ENCODE measurements at regions of chr16 and their contacts with region 1.

Region 1: DNA sequence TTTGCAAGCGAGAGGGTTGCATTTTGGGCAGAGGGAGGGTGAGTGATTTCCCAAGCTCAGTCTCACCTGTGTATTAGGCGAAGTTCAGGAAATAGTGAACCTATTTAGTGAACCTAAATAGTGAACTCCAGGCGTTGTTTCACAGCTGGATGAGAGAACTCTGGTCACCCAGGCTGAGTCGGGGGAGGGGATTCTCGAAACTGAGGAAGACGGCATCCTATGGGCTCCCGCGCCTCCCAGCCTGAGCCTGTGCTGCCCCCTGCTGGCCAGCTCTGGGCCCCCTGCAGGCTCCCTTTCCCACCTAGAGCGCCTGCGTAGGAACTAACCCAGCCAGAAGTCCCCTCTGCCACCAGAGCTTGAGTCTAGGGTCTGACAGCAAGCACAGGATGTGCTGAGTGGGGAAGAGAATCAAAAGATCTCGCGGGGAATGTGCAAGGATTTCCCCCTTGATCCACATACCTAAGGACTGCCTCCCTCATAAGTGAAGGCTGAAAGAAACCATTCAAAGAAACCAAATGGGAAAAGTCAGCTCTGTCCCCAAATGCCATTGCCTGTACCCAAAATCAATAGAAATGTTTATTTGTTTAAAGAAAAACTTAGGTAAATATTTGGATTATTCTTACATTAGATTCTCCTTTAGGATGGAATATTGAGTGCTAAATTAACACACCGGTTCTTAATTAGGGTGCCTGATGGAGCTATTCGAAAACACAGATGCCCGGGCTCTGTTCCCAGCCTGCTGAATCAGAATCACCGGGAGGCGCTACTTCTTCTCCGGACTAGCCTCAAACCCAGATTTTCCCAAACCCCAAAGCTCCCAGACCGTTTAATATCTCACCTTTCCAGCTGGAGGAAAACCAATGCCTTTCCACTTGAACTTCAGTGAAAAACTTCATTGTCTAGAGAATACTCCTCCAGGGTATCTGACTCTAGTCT is 14.8 kb upstream of the MARVELD3 start:
- DNase-seq: peak; percentile 88
- ATAC-seq: peak; percentile 91
- H3K4me3 ChIP-seq: peak overlapping the region in 2 of 5 experiments; percentile 11 to 15
- H3K4me3 Mint-ChIP-seq: peak overlapping the region; percentile 70
- H3K27ac ChIP-seq: no peak overlapping the region
- H3K27ac Mint-ChIP-seq: no peak overlapping the region
- H3K4me1 ChIP-seq: peaks cover 3 to 13% of the 10 kb centered on the region in 2 donors
- H3K4me1 Mint-ChIP-seq: peaks cover 21% of the 10 kb centered on the region
- H3K27me3 ChIP-seq: peaks cover 0 to 2% (median 0%) of the 10 kb centered on the region in 4 experiments
- H3K27me3 Mint-ChIP-seq: no peaks in the 10 kb centered on the region
- CTCF ChIP-seq: peak; percentile 99

Region 2: GRCh38 chr16:69865701-69866100 is 1745.5 kb before region 1 on chr16:
- CTCF ChIA-PET with region 1: no interaction called
- POLR2A ChIA-PET with region 1: no interaction called
- intact Hi-C with region 1: no loop called
- DNase-seq: no peak
- ATAC-seq: no peak
- H3K4me3 ChIP-seq: no peak overlapping the region
- H3K4me3 Mint-ChIP-seq: no peak overlapping the region
- H3K27ac ChIP-seq: no peak overlapping the region
- H3K27ac Mint-ChIP-seq: no peak overlapping the region
- H3K4me1 ChIP-seq: no peaks in the 10 kb centered on the region
- H3K4me1 Mint-ChIP-seq: no peaks in the 10 kb centered on the region
- H3K27me3 ChIP-seq: no peaks in the 10 kb centered on the region
- H3K27me3 Mint-ChIP-seq: no peaks in the 10 kb centered on the region
- CTCF ChIP-seq: no peak

Region 3: DNA sequence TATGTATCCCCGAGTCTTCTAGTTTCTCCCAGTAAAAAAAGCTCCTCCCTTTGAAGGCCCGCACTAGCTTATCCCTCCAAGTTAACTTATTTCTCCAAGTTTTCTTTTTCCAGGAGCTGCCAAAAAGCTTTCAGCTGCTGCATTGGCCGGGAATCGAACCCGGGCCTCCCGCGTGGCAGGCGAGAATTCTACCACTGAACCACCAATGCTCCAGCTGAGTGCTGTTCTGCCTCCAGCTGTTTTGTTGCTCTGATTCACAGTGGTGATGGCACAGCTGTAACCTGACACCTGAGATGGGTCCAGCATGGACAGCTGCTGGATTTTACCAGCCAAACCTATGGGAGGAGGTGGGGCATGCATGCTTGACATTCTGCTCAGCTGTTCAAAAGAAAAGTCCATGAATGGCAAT is 832.3 kb before region 1 on chr16:
- CTCF ChIA-PET with region 1: no interaction called
- POLR2A ChIA-PET with region 1: no interaction called
- intact Hi-C with region 1: no loop called
- DNase-seq: no peak
- ATAC-seq: no peak
- H3K4me3 ChIP-seq: no peak overlapping the region
- H3K4me3 Mint-ChIP-seq: no peak overlapping the region
- H3K27ac ChIP-seq: no peak overlapping the region
- H3K27ac Mint-ChIP-seq: no peak overlapping the region
- H3K4me1 ChIP-seq: no peaks in the 10 kb centered on the region
- H3K4me1 Mint-ChIP-seq: no peaks in the 10 kb centered on the region
- H3K27me3 ChIP-seq: no peaks in the 10 kb centered on the region
- H3K27me3 Mint-ChIP-seq: no peaks in the 10 kb centered on the region
- CTCF ChIP-seq: no peak

Region 4: GRCh38 chr16:71412270-71413160 is 198.7 kb before region 1 on chr16:
- CTCF ChIA-PET with region 1: interaction called, 142 read pairs
- POLR2A ChIA-PET with region 1: interaction called, 3 read pairs
- intact Hi-C with region 1: no loop called
- DNase-seq: peak; percentile 80
- ATAC-seq: peak; percentile 73
- H3K4me3 ChIP-seq: no peak overlapping the region
- H3K4me3 Mint-ChIP-seq: no peak overlapping the region
- H3K27ac ChIP-seq: no peak overlapping the region
- H3K27ac Mint-ChIP-seq: no peak overlapping the region
- H3K4me1 ChIP-seq: peaks cover 6 to 12% of the 10 kb centered on the region in 2 donors
- H3K4me1 Mint-ChIP-seq: peaks cover 7% of the 10 kb centered on the region
- H3K27me3 ChIP-seq: peaks cover 0 to 12% (median 2%) of the 10 kb centered on the region in 4 experiments
- H3K27me3 Mint-ChIP-seq: peaks cover 45% of the 10 kb centered on the region
- CTCF ChIP-seq: peak; percentile 89

Region 5: GRCh38 chr16:71484006-71484893 is 127.0 kb before region 1 on chr16:
- CTCF ChIA-PET with region 1: interaction called, 7 read pairs
- POLR2A ChIA-PET with region 1: interaction called, 3 read pairs
- intact Hi-C with region 1: loop called (anchors 1 kb)
- DNase-seq: peak; percentile 95
- ATAC-seq: peak; percentile 85
- H3K4me3 ChIP-seq: peak overlapping the region; percentile 57 to 96 (median 89)
- H3K4me3 Mint-ChIP-seq: peak overlapping the region; percentile 89
- H3K27ac ChIP-seq: peak overlapping the region; percentile 99 to 100
- H3K27ac Mint-ChIP-seq: peak overlapping the region; percentile 93
- H3K4me1 ChIP-seq: peaks cover 9 to 12% of the 10 kb centered on the region in 2 donors
- H3K4me1 Mint-ChIP-seq: peaks cover 15% of the 10 kb centered on the region
- H3K27me3 ChIP-seq: no peaks in the 10 kb centered on the region
- H3K27me3 Mint-ChIP-seq: peaks cover 7% of the 10 kb centered on the region
- CTCF ChIP-seq: no peak

Region 6: DNA sequence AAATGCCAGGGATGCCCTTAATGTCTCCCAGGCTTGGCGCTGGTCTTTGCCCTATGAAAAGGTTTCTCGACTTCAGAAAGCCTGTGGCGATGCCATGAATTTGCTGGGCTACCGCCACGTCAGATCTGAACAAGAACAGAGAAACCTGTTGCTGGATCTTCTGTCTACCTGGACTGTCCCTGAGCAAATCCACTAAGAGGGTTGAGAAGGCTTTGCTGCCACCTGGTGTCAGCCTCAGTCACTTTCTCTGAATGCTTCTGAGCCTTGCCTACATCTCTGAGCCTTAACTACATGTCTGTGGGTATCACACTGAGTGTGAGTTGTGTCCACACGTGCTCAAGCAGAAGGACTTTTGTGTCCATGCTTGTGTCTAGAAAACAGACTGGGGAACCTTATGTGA is 73.6 kb before region 1 on chr16:
- CTCF ChIA-PET with region 1: interaction called, 67 read pairs
- POLR2A ChIA-PET with region 1: no interaction called
- intact Hi-C with region 1: loop called (anchors 1 kb)
- DNase-seq: peak; percentile 64
- ATAC-seq: peak; percentile 73
- H3K4me3 ChIP-seq: no peak overlapping the region
- H3K4me3 Mint-ChIP-seq: no peak overlapping the region
- H3K27ac ChIP-seq: no peak overlapping the region
- H3K27ac Mint-ChIP-seq: no peak overlapping the region
- H3K4me1 ChIP-seq: peaks cover 13 to 15% of the 10 kb centered on the region in 2 donors
- H3K4me1 Mint-ChIP-seq: peaks cover 15% of the 10 kb centered on the region
- H3K27me3 ChIP-seq: peaks cover 0 to 7% (median 2%) of the 10 kb centered on the region in 4 experiments
- H3K27me3 Mint-ChIP-seq: peaks cover 13% of the 10 kb centered on the region
- CTCF ChIP-seq: peak; percentile 80

Region 7: GRCh38 chr16:71572497-71573116 is 38.6 kb before region 1 on chr16:
- CTCF ChIA-PET with region 1: interaction called, 243 read pairs
- POLR2A ChIA-PET with region 1: no interaction called
- intact Hi-C with region 1: no loop called
- DNase-seq: no peak
- ATAC-seq: no peak
- H3K4me3 ChIP-seq: no peak overlapping the region
- H3K4me3 Mint-ChIP-seq: no peak overlapping the region
- H3K27ac ChIP-seq: no peak overlapping the region
- H3K27ac Mint-ChIP-seq: no peak overlapping the region
- H3K4me1 ChIP-seq: peaks cover 0 to 10% of the 10 kb centered on the region in 2 donors
- H3K4me1 Mint-ChIP-seq: peaks cover 8% of the 10 kb centered on the region
- H3K27me3 ChIP-seq: peaks cover 0 to 1% (median 0%) of the 10 kb centered on the region in 4 experiments
- H3K27me3 Mint-ChIP-seq: peaks cover 3% of the 10 kb centered on the region
- CTCF ChIP-seq: no peak

Region 8: GRCh38 chr16:71746442-71747046 is 135.3 kb after region 1 on chr16:
- CTCF ChIA-PET with region 1: interaction called, 14 read pairs
- POLR2A ChIA-PET with region 1: no interaction called
- intact Hi-C with region 1: no loop called
- DNase-seq: peak; percentile 75
- ATAC-seq: peak; percentile 58
- H3K4me3 ChIP-seq: no peak overlapping the region
- H3K4me3 Mint-ChIP-seq: no peak overlapping the region
- H3K27ac ChIP-seq: no peak overlapping the region
- H3K27ac Mint-ChIP-seq: peak overlapping the region; percentile 50
- H3K4me1 ChIP-seq: no peaks in the 10 kb centered on the region
- H3K4me1 Mint-ChIP-seq: peaks cover 4% of the 10 kb centered on the region
- H3K27me3 ChIP-seq: no peaks in the 10 kb centered on the region
- H3K27me3 Mint-ChIP-seq: no peaks in the 10 kb centered on the region
- CTCF ChIP-seq: peak; percentile 85